PC-3 (cell line): ENCODE measurements at regions of chr15 and their contacts with region 1.

Region 1: GRCh38 chr15:66293419-66294156 is at the start of gene DIS3L:
- DNase-seq: peak; percentile 59
- ATAC-seq: peak; percentile 78
- H3K4me3 ChIP-seq: peak within 1 kb of the TSS; percentile 86
- H3K27ac ChIP-seq: peak within 1 kb of the TSS; percentile 64
- H3K4me1 ChIP-seq: peaks cover 27% of the 10 kb centered on the region
- H3K27me3 ChIP-seq: no peaks in the 10 kb centered on the region
- CTCF ChIP-seq: no peak
- total RNA-seq, gene DIS3L: 18.7 and 19.9 TPM in 2 replicates

Region 2: GRCh38 chr15:66504563-66505429 is 211.2 kb after region 1 on chr15 and contains the starts of genes RPL4 and ZWILCH:
- CTCF ChIA-PET with region 1: no interaction called
- POLR2A ChIA-PET with region 1: no interaction called
- intact Hi-C with region 1: loop called (anchors 10 kb)
- DNase-seq: peak; percentile 75
- ATAC-seq: peak; percentile 85
- H3K4me3 ChIP-seq: peak within 1 kb of the TSS; percentile 99
- H3K27ac ChIP-seq: peak within 1 kb of the TSS; percentile 89
- H3K4me1 ChIP-seq: peaks cover 13% of the 10 kb centered on the region
- H3K27me3 ChIP-seq: no peaks in the 10 kb centered on the region
- CTCF ChIP-seq: no peak
- total RNA-seq, gene RPL4: 1,239 and 2,773 TPM in 2 replicates
- total RNA-seq, gene ZWILCH: 18.1 and 19.9 TPM in 2 replicates